ENCODE measurements at regions of chr1 and their contacts with region 1.

Region 1: GRCh38 chr1:193406901-193407300 is 220.5 kb upstream of the B3GALT2 start:
- DNase-seq: peak in 1 of 2 donors; percentile 70
- ATAC-seq: peak in 2 of 3 donors; percentile 66 to 70
- H3K4me3 ChIP-seq: no peak overlapping the region
- H3K4me3 Mint-ChIP-seq: no peak overlapping the region
- H3K27ac ChIP-seq: no peak overlapping the region
- H3K27ac Mint-ChIP-seq: no peak overlapping the region
- H3K4me1 ChIP-seq: no peaks in the 10 kb centered on the region
- H3K4me1 Mint-ChIP-seq: peaks cover 11 to 13% of the 10 kb centered on the region in 2 donors
- H3K27me3 ChIP-seq: no peaks in the 10 kb centered on the region
- H3K27me3 Mint-ChIP-seq: no peaks in the 10 kb centered on the region
- CTCF ChIP-seq: peak; percentile 81

Region 2: DNA sequence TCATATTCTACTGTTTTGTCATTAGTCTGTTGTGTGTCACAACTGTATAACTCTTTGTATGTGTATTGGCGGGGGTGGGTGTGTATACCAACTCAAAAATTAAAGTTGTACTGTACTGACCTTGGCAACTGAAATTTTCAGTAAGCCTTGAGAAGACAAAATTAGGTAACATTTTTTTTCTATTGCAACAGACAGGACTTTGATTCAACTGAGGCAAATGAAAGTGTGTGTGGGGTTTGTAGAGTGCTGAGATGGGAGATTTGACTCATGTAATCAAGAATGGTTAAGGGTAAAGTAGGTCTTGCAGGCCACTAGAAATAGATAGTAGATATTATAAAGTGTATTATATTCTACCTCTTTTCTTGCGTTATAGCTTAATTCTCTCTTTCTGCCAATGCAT is 205.9 kb before region 1 on chr1:
- intact Hi-C with region 1: no loop called
- DNase-seq: no peak
- ATAC-seq: no peak
- H3K4me3 ChIP-seq: no peak overlapping the region
- H3K4me3 Mint-ChIP-seq: no peak overlapping the region
- H3K27ac ChIP-seq: no peak overlapping the region
- H3K27ac Mint-ChIP-seq: peak overlapping the region in 1 of 2 donors; percentile 29
- H3K4me1 ChIP-seq: peaks cover 2% of the 10 kb centered on the region
- H3K4me1 Mint-ChIP-seq: peaks cover 37 to 40% of the 10 kb centered on the region in 2 donors
- H3K27me3 ChIP-seq: no peaks in the 10 kb centered on the region
- H3K27me3 Mint-ChIP-seq: no peaks in the 10 kb centered on the region
- CTCF ChIP-seq: no peak

Region 3: DNA sequence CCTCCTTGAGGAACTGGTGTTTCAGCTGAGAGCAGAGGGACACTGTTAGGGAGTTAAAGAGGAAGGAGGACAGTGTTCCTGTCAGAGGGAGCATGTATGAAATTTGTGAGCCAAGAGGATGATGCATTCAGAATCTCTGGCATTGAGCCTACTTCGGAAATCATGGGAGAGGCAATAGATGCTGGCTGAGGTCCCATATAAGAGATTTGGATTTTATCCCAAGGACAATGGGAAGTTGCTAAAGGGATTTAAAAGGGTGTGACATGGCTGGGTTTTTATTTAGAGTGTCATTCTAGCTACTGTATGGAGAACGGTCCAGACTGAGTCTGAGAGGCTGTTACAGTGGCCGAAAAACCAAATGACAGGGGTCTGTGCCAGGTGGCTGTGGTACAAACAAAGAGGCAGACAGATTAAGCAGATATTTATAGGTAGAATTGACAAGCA is 182.7 kb after region 1 on chr1:
- intact Hi-C with region 1: loop called (anchors 5 kb)
- DNase-seq: no peak
- ATAC-seq: no peak
- H3K4me3 ChIP-seq: no peak overlapping the region
- H3K4me3 Mint-ChIP-seq: no peak overlapping the region
- H3K27ac ChIP-seq: no peak overlapping the region
- H3K27ac Mint-ChIP-seq: peak overlapping the region in 1 of 2 donors; percentile 51
- H3K4me1 ChIP-seq: no peaks in the 10 kb centered on the region
- H3K4me1 Mint-ChIP-seq: peaks cover 22 to 31% of the 10 kb centered on the region in 2 donors
- H3K27me3 ChIP-seq: no peaks in the 10 kb centered on the region
- H3K27me3 Mint-ChIP-seq: no peaks in the 10 kb centered on the region
- CTCF ChIP-seq: no peak

Region 4: DNA sequence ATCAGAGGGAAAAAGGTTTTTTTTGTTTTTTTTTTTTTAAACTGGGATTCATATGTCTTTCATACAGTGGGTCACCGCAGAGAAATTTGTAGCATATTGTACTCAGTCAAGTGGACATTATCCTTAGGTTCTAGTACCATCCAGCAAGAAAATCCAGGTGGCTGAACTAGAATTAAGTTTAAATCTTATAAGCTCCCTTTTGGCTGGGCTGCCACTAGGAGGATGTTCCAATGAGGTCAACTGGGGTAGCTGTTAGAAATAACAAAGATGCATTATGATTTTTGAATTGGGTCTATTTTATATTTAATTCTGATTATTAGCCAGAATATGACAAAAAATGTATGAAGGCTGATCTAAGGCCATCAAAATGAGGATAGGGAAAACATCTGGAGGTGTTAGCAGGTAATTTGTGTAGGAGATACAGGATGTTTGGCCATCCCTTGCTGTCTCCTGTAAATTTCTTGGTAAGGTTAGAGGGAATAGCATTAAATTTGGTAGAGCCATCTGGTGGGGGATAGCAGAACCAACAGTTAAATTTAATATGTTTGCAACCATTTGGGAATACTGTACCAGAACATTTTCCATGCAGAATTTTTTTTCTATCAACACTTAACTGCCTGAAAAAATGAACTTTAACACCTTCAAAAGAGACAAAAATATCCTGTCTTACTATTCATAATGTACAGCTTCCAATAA is 348.0 kb after region 1 on chr1:
- intact Hi-C with region 1: loop called (anchors 2 kb)
- DNase-seq: peak in 1 of 2 donors; percentile 20
- ATAC-seq: no peak
- H3K4me3 ChIP-seq: no peak overlapping the region
- H3K4me3 Mint-ChIP-seq: no peak overlapping the region
- H3K27ac ChIP-seq: no peak overlapping the region
- H3K27ac Mint-ChIP-seq: no peak overlapping the region
- H3K4me1 ChIP-seq: no peaks in the 10 kb centered on the region
- H3K4me1 Mint-ChIP-seq: no peaks in the 10 kb centered on the region
- H3K27me3 ChIP-seq: no peaks in the 10 kb centered on the region
- H3K27me3 Mint-ChIP-seq: no peaks in the 10 kb centered on the region
- CTCF ChIP-seq: no peak

Region 5: DNA sequence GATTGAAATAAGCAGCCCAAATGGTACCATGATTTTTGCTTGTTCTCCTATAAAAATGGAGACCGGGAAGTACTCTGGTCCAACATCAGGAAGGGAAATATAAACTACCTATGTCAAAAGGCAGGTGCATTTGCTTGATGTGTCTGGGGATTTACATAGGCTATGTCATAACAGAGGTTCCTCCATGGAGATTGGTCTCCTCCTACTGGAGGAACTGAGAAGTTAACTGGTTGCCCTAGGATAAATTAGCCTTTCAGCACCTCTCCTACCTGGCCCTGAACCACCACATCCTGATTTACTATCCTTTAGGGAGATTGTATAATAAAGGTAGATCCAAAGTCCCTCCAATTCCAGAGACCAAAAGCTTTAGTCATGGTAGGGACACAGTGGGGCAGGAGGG is 888.8 kb after region 1 on chr1:
- intact Hi-C with region 1: loop called (anchors 1 kb)
- DNase-seq: peak in 1 of 2 donors; percentile 84
- ATAC-seq: peak; percentile 46 to 75 (median 54)
- H3K4me3 ChIP-seq: no peak overlapping the region
- H3K4me3 Mint-ChIP-seq: no peak overlapping the region
- H3K27ac ChIP-seq: no peak overlapping the region
- H3K27ac Mint-ChIP-seq: no peak overlapping the region
- H3K4me1 ChIP-seq: no peaks in the 10 kb centered on the region
- H3K4me1 Mint-ChIP-seq: no peaks in the 10 kb centered on the region
- H3K27me3 ChIP-seq: no peaks in the 10 kb centered on the region
- H3K27me3 Mint-ChIP-seq: no peaks in the 10 kb centered on the region
- CTCF ChIP-seq: peak; percentile 42

Measured in natural killer cell (primary cell).